B cell (primary cell): ENCODE measurements at regions of chr19 and their contacts with region 1.

Region 1: DNA sequence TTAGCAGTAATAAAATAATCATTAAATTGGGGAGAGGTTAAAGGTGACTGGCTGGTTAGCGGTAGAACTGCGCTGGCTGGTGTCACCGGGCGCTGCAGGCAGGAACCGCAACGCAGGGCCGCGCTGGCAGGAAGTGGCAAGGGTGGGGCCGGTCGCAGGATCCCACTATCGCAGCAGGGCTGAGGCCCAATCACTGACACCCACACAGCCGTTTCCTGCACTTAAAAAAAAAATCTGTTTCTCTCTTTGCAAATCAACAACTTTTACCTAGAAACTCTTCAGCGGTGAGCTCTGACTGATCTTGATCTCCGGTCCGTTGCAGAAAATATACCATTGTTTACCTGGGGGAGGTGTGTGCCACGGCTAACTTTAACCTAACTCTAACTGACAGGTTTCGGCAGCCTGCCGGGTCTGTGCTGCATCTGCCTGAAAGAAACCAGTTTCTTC is 46.9 kb downstream of the KLF2 start:
- DNase-seq: peak; percentile 93
- ATAC-seq: peak; percentile 73
- H3K4me3 ChIP-seq: peak overlapping the region; percentile 15 to 47 (median 19)
- H3K4me3 Mint-ChIP-seq: no peak overlapping the region
- H3K27ac ChIP-seq: peak overlapping the region; percentile 85 to 94
- H3K27ac Mint-ChIP-seq: no peak overlapping the region
- H3K4me1 ChIP-seq: peaks cover 94 to 100% of the 10 kb centered on the region in 2 donors
- H3K4me1 Mint-ChIP-seq: peaks cover 38% of the 10 kb centered on the region
- H3K27me3 ChIP-seq: no peaks in the 10 kb centered on the region
- H3K27me3 Mint-ChIP-seq: no peaks in the 10 kb centered on the region
- CTCF ChIP-seq: peak; percentile 27

Region 2: DNA sequence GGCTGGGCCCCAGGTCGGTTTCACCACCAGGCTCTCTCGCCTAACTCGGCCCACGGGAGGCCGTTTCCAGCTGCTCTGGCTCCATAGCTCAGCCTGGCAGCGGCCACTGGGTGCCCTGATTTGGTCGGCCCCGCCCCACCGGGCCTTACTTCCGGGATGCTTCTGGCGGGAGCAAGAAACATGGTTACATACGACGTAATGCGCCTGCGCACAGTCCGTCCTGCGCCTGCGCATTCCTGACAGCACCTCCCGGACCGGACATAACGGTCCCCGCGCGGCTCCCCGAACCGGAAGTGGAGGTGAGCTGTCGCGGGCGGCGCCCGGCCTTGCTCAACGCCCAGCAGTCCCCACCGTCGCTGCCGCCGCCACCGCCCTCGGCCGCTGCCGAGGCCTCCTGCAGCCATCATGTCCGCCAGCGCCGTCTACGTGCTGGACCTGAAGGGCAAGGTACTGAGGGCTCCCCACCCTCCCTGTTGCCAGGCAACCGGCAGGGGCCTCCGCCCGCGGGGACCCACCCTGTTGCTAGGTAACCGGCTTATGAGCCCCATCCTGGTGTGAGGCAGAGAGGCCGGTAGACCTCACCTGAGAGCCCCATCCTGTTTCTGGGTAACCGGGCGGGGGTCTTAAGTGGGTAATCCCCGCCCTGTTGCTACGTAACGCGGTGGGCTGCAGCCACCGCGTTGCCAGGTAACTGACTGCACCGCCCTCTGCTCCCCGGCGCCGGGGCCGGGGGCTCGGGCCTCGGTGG is 173.8 kb before region 1 on chr19 and contains the start of gene AP1M1:
- CTCF ChIA-PET with region 1: no interaction called
- POLR2A ChIA-PET with region 1: no interaction called
- intact Hi-C with region 1: loop called (anchors 1 kb)
- DNase-seq: peak; percentile 99
- ATAC-seq: peak; percentile 93
- H3K4me3 ChIP-seq: peak within 1 kb of the TSS; percentile 67 to 92 (median 87)
- H3K4me3 Mint-ChIP-seq: peak within 1 kb of the TSS; percentile 93
- H3K27ac ChIP-seq: peak within 1 kb of the TSS; percentile 66 to 92
- H3K27ac Mint-ChIP-seq: peak within 1 kb of the TSS; percentile 98
- H3K4me1 ChIP-seq: peaks cover 18 to 28% of the 10 kb centered on the region in 2 donors
- H3K4me1 Mint-ChIP-seq: peaks cover 35% of the 10 kb centered on the region
- H3K27me3 ChIP-seq: no peaks in the 10 kb centered on the region
- H3K27me3 Mint-ChIP-seq: no peaks in the 10 kb centered on the region
- CTCF ChIP-seq: no peak
- total RNA-seq, gene AP1M1: 90.4 and 102 TPM in 2 replicates

Region 3: GRCh38 chr19:16324384-16325160 is 47.0 kb before region 1 on chr19 and contains the start of gene KLF2:
- CTCF ChIA-PET with region 1: interaction called, 60 read pairs
- POLR2A ChIA-PET with region 1: interaction called, 337 read pairs
- intact Hi-C with region 1: no loop called
- DNase-seq: peak; percentile 99
- ATAC-seq: peak; percentile 59
- H3K4me3 ChIP-seq: peak within 1 kb of the TSS; percentile 35 to 100 (median 98)
- H3K4me3 Mint-ChIP-seq: peak within 1 kb of the TSS; percentile 76
- H3K27ac ChIP-seq: peak within 1 kb of the TSS; percentile 99
- H3K27ac Mint-ChIP-seq: peak within 1 kb of the TSS; percentile 91
- H3K4me1 ChIP-seq: peaks cover 42 to 55% of the 10 kb centered on the region in 2 donors
- H3K4me1 Mint-ChIP-seq: peaks cover 61% of the 10 kb centered on the region
- H3K27me3 ChIP-seq: no peaks in the 10 kb centered on the region
- H3K27me3 Mint-ChIP-seq: no peaks in the 10 kb centered on the region
- CTCF ChIP-seq: no peak
- total RNA-seq, gene KLF2: 241 and 242 TPM in 2 replicates

Region 4: GRCh38 chr19:16338470-16339360 is 32.8 kb before region 1 on chr19:
- CTCF ChIA-PET with region 1: interaction called, 16 read pairs
- POLR2A ChIA-PET with region 1: interaction called, 39 read pairs
- intact Hi-C with region 1: loop called (anchors 1 kb)
- DNase-seq: peak; percentile 64
- ATAC-seq: no peak
- H3K4me3 ChIP-seq: peak overlapping the region in 4 of 5 experiments; percentile 10 to 49 (median 29)
- H3K4me3 Mint-ChIP-seq: peak overlapping the region; percentile 83
- H3K27ac ChIP-seq: peak overlapping the region; percentile 27 to 39
- H3K27ac Mint-ChIP-seq: peak overlapping the region; percentile 87
- H3K4me1 ChIP-seq: peaks cover 53 to 71% of the 10 kb centered on the region in 2 donors
- H3K4me1 Mint-ChIP-seq: peaks cover 61% of the 10 kb centered on the region
- H3K27me3 ChIP-seq: no peaks in the 10 kb centered on the region
- H3K27me3 Mint-ChIP-seq: no peaks in the 10 kb centered on the region
- CTCF ChIP-seq: peak; percentile 14

Region 5: GRCh38 chr19:16441661-16442162 is 70.1 kb after region 1 on chr19:
- CTCF ChIA-PET with region 1: interaction called, 3 read pairs
- POLR2A ChIA-PET with region 1: interaction called, 10 read pairs
- intact Hi-C with region 1: loop called (anchors 1 kb)
- DNase-seq: no peak
- ATAC-seq: no peak
- H3K4me3 ChIP-seq: no peak overlapping the region
- H3K4me3 Mint-ChIP-seq: peak overlapping the region; percentile 16
- H3K27ac ChIP-seq: no peak overlapping the region
- H3K27ac Mint-ChIP-seq: peak overlapping the region; percentile 97
- H3K4me1 ChIP-seq: peaks cover 57 to 80% of the 10 kb centered on the region in 2 donors
- H3K4me1 Mint-ChIP-seq: peaks cover 77% of the 10 kb centered on the region
- H3K27me3 ChIP-seq: no peaks in the 10 kb centered on the region
- H3K27me3 Mint-ChIP-seq: no peaks in the 10 kb centered on the region
- CTCF ChIP-seq: peak; percentile 42